Activated CD8-positive, alpha-beta memory T cell treated with anti-CD3 and anti-CD28 coated beads, Interleukin-2, amount 10 ng/mL, durations not matched to agents 7 days and 5 days (primary cell): ENCODE measurements at regions of chr11 and their contacts with region 1.

Region 1: GRCh38 chr11:128714881-128715280 is 21.0 kb downstream of the FLI1 start:
- DNase-seq: peak; percentile 40
- ATAC-seq: no peak
- H3K4me3 Mint-ChIP-seq: no peak overlapping the region
- H3K27ac Mint-ChIP-seq: peak overlapping the region; percentile 35
- H3K4me1 Mint-ChIP-seq: peaks cover 92% of the 10 kb centered on the region
- H3K27me3 Mint-ChIP-seq: no peaks in the 10 kb centered on the region

Region 2: GRCh38 chr11:128726458-128727139 is 11.7 kb after region 1 on chr11:
- CTCF ChIA-PET with region 1: interaction called, 13 read pairs
- DNase-seq: peak; percentile 72
- ATAC-seq: peak; percentile 45
- H3K4me3 Mint-ChIP-seq: peak overlapping the region; percentile 44
- H3K27ac Mint-ChIP-seq: peak overlapping the region; percentile 92
- H3K4me1 Mint-ChIP-seq: peaks cover 97% of the 10 kb centered on the region
- H3K27me3 Mint-ChIP-seq: no peaks in the 10 kb centered on the region

Region 3: GRCh38 chr11:128784059-128784804 is 69.4 kb after region 1 on chr11:
- CTCF ChIA-PET with region 1: no interaction called
- DNase-seq: no peak
- ATAC-seq: no peak
- H3K4me3 Mint-ChIP-seq: no peak overlapping the region
- H3K27ac Mint-ChIP-seq: peak overlapping the region; percentile 24
- H3K4me1 Mint-ChIP-seq: peaks cover 39% of the 10 kb centered on the region
- H3K27me3 Mint-ChIP-seq: no peaks in the 10 kb centered on the region